Ovary (tissue), 10 donors: ENCODE measurements at regions of chr1 and their contacts with region 1.

Region 1: GRCh38 chr1:8348777-8349491 is 31.0 kb downstream of the SLC45A1 start:
- DNase-seq: peak; percentile 59 to 79 (median 75)
- H3K4me3 ChIP-seq: no peak overlapping the region
- H3K27ac ChIP-seq: no peak overlapping the region
- H3K4me1 ChIP-seq: peaks cover 24% of the 10 kb centered on the region
- H3K27me3 ChIP-seq: no peaks in the 10 kb centered on the region
- CTCF ChIP-seq: peak; percentile 47 to 81 (median 65)
- EP300 ChIP-seq: no peak
- POLR2A ChIP-seq: no peak

Region 2: DNA sequence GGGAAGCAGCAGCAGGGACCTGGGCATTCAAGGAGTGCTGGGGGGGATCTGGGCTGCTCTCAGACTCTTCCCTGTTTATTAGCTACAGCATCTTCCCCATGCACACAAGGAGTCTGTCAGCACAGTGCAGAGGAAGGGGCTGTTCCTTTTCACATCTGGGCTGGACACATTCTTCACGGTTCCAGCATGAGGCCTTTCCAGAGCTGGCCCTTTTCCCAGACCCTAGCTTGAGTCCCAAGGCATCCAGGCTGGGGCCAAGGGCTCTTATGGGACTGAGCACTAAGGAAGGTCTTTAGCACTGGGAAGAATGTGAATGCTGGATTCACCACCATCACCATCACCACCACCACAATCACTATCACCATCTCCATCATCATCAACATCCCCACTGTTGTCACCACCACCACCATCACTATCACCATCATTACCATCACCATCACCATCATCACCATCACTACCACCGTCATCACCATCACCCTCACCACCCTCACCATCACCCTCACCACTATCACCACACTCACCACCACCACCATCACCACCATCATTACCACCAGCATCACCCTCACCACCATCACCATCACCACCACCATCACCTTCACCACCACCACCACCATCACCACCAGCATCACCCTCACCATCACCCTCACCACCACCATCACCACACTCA is 359.0 kb before region 1 on chr1:
- intact Hi-C with region 1: loop called in 1 of 4 experiments (anchors 10 kb)
- DNase-seq: no peak
- H3K4me3 ChIP-seq: no peak overlapping the region
- H3K27ac ChIP-seq: no peak overlapping the region
- H3K4me1 ChIP-seq: peaks cover 3% of the 10 kb centered on the region
- H3K27me3 ChIP-seq: no peaks in the 10 kb centered on the region
- CTCF ChIP-seq: no peak
- EP300 ChIP-seq: no peak
- POLR2A ChIP-seq: no peak

Region 3: GRCh38 chr1:8314346-8315280 is 34.3 kb before region 1 on chr1:
- intact Hi-C with region 1: no loop called
- DNase-seq: peak; percentile 77 to 88 (median 86)
- H3K4me3 ChIP-seq: no peak overlapping the region
- H3K27ac ChIP-seq: no peak overlapping the region
- H3K4me1 ChIP-seq: peaks cover 12% of the 10 kb centered on the region
- H3K27me3 ChIP-seq: no peaks in the 10 kb centered on the region
- CTCF ChIP-seq: peak; percentile 65 to 93 (median 88)
- EP300 ChIP-seq: no peak
- POLR2A ChIP-seq: peak; percentile 16

Region 4: DNA sequence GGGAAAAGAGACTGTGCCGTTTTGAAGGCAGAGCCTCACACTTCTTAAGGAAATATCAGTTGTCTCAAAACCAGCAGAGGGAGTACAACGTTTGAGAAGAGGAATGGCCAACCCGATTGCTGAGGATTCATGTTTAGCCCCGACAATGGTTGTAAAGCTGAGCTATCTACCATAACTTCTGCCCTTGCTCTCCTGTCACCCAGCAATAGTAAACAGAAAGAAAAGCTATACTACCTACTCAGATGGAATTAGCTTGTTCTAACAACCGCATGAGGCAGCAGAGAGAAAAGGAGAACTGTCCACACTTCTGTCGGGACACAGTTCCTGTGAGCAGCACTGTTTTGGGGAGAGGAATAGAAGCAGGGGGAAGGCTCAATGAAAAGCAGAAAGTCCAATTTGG is 60.2 kb after region 1 on chr1:
- intact Hi-C with region 1: loop called in 1 of 4 experiments (anchors 10 kb)
- DNase-seq: no peak
- H3K4me3 ChIP-seq: peak overlapping the region; percentile 19
- H3K27ac ChIP-seq: peak overlapping the region in 1 of 2 donors; percentile 45
- H3K4me1 ChIP-seq: peaks cover 41% of the 10 kb centered on the region
- H3K27me3 ChIP-seq: no peaks in the 10 kb centered on the region
- CTCF ChIP-seq: peak in 2 of 3 donors; percentile 31 to 62
- EP300 ChIP-seq: no peak
- POLR2A ChIP-seq: no peak

Region 5: DNA sequence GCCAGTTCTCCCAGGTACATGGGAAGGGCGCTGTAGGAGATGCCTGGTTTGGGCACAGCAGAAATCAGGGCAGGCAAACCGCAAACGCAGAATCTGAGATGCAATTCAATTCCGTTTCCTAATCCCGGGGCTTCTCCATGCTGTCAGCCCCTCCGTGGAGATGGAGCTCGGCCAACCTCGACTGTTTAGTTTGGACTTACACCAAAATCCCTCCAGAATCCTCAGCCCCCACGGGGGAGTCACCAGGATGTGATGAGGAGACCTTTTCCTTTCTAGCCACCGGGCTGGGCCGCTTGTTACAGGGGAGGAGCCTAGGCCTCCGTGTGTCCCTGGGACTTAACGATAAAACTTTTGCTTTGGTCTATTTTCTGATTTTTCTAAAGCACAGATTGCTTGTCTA is 669.4 kb after region 1 on chr1:
- intact Hi-C with region 1: no loop called
- DNase-seq: peak in 4 of 5 donors; percentile 47 to 56 (median 52)
- H3K4me3 ChIP-seq: no peak overlapping the region
- H3K27ac ChIP-seq: no peak overlapping the region
- H3K4me1 ChIP-seq: peaks cover 2% of the 10 kb centered on the region
- H3K27me3 ChIP-seq: no peaks in the 10 kb centered on the region
- CTCF ChIP-seq: no peak
- EP300 ChIP-seq: no peak
- POLR2A ChIP-seq: no peak